ENCODE measurements at regions of chr11 and their contacts with region 1.

Region 1: GRCh38 chr11:26219183-26220117 is 112.5 kb upstream of the ANO3 start:
- DNase-seq: no peak
- H3K4me3 Mint-ChIP-seq: no peak overlapping the region
- H3K27ac Mint-ChIP-seq: no peak overlapping the region
- H3K4me1 Mint-ChIP-seq: no peaks in the 10 kb centered on the region
- H3K27me3 Mint-ChIP-seq: no peaks in the 10 kb centered on the region

Region 2: DNA sequence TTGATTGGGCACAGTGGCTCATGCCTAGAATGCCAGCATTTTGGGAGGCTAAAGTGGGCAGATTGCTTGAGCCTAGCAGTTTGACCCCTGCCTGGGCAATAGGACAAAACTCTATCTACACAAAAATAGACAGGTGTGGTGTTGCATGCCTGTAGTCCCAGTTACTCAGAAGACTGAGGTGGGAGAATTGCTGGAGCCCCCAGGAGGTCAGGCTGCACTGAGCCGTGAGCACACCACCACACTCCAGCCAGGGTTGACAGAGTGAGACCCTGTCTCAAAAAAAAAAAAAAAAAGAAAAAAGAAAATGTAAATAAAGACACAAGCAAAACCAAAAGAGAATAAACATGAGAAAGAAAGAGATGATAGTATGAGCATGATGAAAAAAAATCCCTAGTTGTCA is 689.9 kb before region 1 on chr11:
- CTCF ChIA-PET with region 1: no interaction called
- intact Hi-C with region 1: loop called (anchors 10 kb)
- DNase-seq: no peak
- H3K4me3 Mint-ChIP-seq: no peak overlapping the region
- H3K27ac Mint-ChIP-seq: no peak overlapping the region
- H3K4me1 Mint-ChIP-seq: no peaks in the 10 kb centered on the region
- H3K27me3 Mint-ChIP-seq: no peaks in the 10 kb centered on the region

Region 3: DNA sequence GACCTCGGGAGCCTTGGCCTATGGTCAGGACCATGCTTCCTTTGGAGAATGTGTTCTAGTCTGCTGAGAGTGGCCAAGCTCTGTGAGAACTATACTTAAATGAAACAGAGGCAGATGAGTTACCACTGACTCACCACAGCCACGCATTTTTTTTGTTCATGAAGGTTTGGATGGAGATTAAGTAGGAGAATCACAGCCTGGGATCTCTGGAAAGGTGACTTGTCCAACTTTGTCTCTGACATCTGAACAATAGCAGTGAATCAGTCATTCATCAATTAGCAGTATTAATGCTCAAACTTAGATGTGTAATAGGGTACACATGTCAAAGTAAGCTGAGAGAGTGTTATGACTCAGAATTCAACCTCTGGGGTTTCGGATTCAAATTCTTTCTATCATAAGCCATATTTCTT is 11.8 kb after region 1 on chr11:
- CTCF ChIA-PET with region 1: no interaction called
- intact Hi-C with region 1: no loop called
- DNase-seq: no peak
- H3K4me3 Mint-ChIP-seq: no peak overlapping the region
- H3K27ac Mint-ChIP-seq: no peak overlapping the region
- H3K4me1 Mint-ChIP-seq: no peaks in the 10 kb centered on the region
- H3K27me3 Mint-ChIP-seq: no peaks in the 10 kb centered on the region